Right ventricle myocardium inferior (tissue), 1 donor: ENCODE measurements at regions of chr11 and their contacts with region 1.

Region 1: GRCh38 chr11:57335343-57336110 is at the start of gene SSRP1:
- DNase-seq: peak; percentile 95
- ATAC-seq: peak; percentile 98
- total RNA-seq, gene SSRP1: 33.8 TPM

Region 2: DNA sequence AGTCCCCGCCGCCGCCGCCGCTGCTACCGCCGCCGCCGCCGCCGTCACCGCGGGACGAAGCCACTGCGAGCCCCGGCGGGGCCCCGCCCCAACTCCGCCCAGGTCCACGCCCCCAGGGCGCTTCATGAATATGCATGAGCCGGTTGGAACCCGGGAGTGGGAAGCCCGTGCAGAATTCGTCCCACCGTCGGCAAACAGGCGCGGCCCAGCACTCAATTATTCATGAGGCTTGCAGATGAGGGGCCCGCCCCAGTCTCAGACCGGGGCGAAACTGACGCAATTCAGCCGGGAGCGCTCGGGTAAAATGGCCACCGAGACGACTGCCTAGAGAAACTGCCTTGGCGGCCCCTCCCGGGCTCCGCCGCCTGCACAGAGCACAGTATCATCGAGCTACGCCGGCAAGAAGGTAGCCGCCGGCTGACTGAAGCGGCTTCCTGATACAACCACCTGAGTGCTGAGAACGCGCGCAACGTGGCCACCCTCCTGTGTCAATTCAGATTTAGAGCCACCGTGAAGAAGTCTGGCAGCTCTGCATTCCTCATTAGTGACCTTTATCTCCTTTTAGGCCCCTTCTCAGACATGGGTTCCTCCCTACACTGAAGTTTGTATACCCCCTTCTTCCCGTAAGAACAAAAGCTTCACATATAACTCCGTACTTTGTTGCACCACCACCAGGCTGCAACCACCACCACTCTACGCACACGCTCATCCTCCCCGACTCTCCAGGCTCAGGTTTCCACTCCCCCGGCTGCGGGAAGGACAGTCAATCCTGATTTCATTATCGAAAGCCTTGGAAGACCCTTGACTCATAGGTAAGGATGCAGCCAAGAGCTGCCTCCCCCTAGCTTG is 10.4 kb before region 1 on chr11 and contains the start of gene TNKS1BP1:
- intact Hi-C with region 1: loop called (anchors 1 kb)
- DNase-seq: peak; percentile 99
- ATAC-seq: peak; percentile 87
- total RNA-seq, gene TNKS1BP1: 51.2 TPM